ENCODE measurements at regions of chr20 and their contacts with region 1.

Region 1: DNA sequence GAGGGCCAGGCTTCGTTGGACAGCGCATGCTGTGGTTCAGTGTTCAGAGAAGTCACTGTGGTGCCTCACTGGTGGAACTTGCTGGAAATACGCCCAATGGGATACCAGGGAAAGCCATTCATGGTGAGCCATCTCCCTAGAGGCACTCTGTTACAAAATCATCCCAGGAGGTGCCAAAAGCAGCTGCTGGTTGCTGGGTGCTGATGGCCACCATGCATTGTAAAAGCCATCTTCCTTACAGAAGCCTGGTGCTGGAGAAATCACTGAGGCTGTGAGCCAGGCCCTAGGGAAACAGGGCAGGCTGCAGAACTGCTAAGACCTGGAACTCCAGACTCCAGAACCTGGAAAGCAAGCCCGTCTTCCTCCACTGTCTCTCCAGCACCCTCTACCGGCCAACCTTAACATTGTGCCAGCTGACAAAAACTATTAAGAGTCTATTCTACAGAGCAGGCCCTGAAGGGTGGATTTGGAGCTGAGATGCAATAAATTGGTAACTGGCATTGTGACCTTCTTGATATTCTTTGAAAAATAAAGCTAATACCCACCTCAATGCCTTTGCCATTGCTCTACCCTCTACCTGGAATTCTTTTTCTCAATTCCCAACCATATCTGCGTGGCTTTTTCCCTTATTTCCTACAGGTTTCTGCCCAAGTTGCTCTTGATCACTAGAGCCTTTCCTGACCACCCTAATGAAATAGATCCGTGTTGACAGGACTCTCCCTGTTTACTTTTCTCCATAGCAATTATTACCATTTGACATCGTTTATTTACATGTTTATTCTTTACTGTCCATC is 18.5 kb downstream of the SNRPB start:
- DNase-seq: peak; percentile 48
- ATAC-seq: peak; percentile 86
- H3K4me3 ChIP-seq: no peak overlapping the region
- H3K27ac ChIP-seq: no peak overlapping the region
- H3K4me1 ChIP-seq: no peaks in the 10 kb centered on the region
- H3K27me3 ChIP-seq: no peaks in the 10 kb centered on the region
- CTCF ChIP-seq: peak; percentile 64 to 87 (median 84); a peak in 5 of 6 replicates
- POLR2A ChIP-seq: no peak
- RAD21 ChIP-seq: peak; percentile 71

Region 2: GRCh38 chr20:2022163-2022562 is 430.0 kb before region 1 on chr20:
- CTCF ChIA-PET with region 1: no interaction called
- POLR2A ChIA-PET with region 1: no interaction called
- RAD21 ChIA-PET with region 1: no interaction called
- intact Hi-C with region 1: no loop called
- DNase-seq: no peak
- ATAC-seq: no peak
- H3K4me3 ChIP-seq: no peak overlapping the region
- H3K27ac ChIP-seq: no peak overlapping the region
- H3K4me1 ChIP-seq: no peaks in the 10 kb centered on the region
- H3K27me3 ChIP-seq: peaks cover 76% of the 10 kb centered on the region
- CTCF ChIP-seq: no peak
- POLR2A ChIP-seq: no peak
- RAD21 ChIP-seq: no peak

Region 3: GRCh38 chr20:2387180-2387577 is 65.0 kb before region 1 on chr20:
- CTCF ChIA-PET with region 1: interaction called, 13 read pairs
- POLR2A ChIA-PET with region 1: no interaction called
- RAD21 ChIA-PET with region 1: interaction called in 1 of 2 experiments, 5 read pairs
- intact Hi-C with region 1: no loop called
- DNase-seq: peak; percentile 39
- ATAC-seq: peak; percentile 93
- H3K4me3 ChIP-seq: no peak overlapping the region
- H3K27ac ChIP-seq: no peak overlapping the region
- H3K4me1 ChIP-seq: peaks cover 0 to 8% of the 10 kb centered on the region in 2 experiments; a peak in 2 of 4 replicates
- H3K27me3 ChIP-seq: no peaks in the 10 kb centered on the region
- CTCF ChIP-seq: peak; percentile 52 to 81 (median 80); a peak in 5 of 6 replicates
- POLR2A ChIP-seq: no peak
- RAD21 ChIP-seq: peak; percentile 49

Region 4: GRCh38 chr20:2421247-2421646 is 30.9 kb before region 1 on chr20:
- CTCF ChIA-PET with region 1: no interaction called
- POLR2A ChIA-PET with region 1: no interaction called
- RAD21 ChIA-PET with region 1: no interaction called
- intact Hi-C with region 1: loop called (anchors 2 kb)
- DNase-seq: peak; percentile 21
- ATAC-seq: peak; percentile 72; the same call in 1 of the 2 replicates
- H3K4me3 ChIP-seq: no peak overlapping the region
- H3K27ac ChIP-seq: no peak overlapping the region
- H3K4me1 ChIP-seq: no peaks in the 10 kb centered on the region
- H3K27me3 ChIP-seq: no peaks in the 10 kb centered on the region
- CTCF ChIP-seq: peak; percentile 37 to 54 (median 46); a peak in 4 of 6 replicates
- POLR2A ChIP-seq: no peak
- RAD21 ChIP-seq: peak; percentile 56

Region 5: DNA sequence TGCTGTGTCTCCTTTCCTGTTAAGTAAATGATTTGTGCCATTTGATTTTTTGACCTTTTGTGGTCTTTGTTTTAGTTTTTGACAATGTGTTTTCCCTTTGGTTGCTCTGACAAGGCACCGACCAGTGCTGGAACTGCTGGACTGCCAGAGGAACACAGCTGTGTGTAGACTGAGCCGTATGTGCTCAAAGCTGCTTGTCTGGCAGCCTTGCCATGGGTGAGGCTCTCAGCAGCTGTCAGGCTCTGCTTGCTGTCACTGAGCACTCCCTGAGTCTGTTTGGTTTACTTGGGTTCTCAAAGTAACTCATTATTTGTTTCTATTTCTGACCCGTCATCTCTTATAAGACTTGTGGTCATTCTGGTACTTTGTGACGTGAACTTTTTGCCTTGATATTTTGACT is 33.5 kb after region 1 on chr20:
- CTCF ChIA-PET with region 1: no interaction called
- POLR2A ChIA-PET with region 1: no interaction called
- RAD21 ChIA-PET with region 1: no interaction called
- intact Hi-C with region 1: no loop called
- DNase-seq: no peak
- ATAC-seq: no peak
- H3K4me3 ChIP-seq: no peak overlapping the region
- H3K27ac ChIP-seq: no peak overlapping the region
- H3K4me1 ChIP-seq: no peaks in the 10 kb centered on the region
- H3K27me3 ChIP-seq: no peaks in the 10 kb centered on the region
- CTCF ChIP-seq: no peak
- POLR2A ChIP-seq: no peak
- RAD21 ChIP-seq: no peak

Region 6: GRCh38 chr20:2991532-2991931 is 539.4 kb after region 1 on chr20:
- CTCF ChIA-PET with region 1: no interaction called
- POLR2A ChIA-PET with region 1: no interaction called
- RAD21 ChIA-PET with region 1: no interaction called
- intact Hi-C with region 1: no loop called
- DNase-seq: no peak
- ATAC-seq: no peak
- H3K4me3 ChIP-seq: no peak overlapping the region
- H3K27ac ChIP-seq: no peak overlapping the region
- H3K4me1 ChIP-seq: no peaks in the 10 kb centered on the region
- H3K27me3 ChIP-seq: no peaks in the 10 kb centered on the region
- CTCF ChIP-seq: no peak
- POLR2A ChIP-seq: no peak
- RAD21 ChIP-seq: no peak

Measured in HCT116 (cell line).